Right ventricle myocardium superior (tissue), 1 donor: ENCODE measurements at regions of chr10 and their contacts with region 1.

Region 1: DNA sequence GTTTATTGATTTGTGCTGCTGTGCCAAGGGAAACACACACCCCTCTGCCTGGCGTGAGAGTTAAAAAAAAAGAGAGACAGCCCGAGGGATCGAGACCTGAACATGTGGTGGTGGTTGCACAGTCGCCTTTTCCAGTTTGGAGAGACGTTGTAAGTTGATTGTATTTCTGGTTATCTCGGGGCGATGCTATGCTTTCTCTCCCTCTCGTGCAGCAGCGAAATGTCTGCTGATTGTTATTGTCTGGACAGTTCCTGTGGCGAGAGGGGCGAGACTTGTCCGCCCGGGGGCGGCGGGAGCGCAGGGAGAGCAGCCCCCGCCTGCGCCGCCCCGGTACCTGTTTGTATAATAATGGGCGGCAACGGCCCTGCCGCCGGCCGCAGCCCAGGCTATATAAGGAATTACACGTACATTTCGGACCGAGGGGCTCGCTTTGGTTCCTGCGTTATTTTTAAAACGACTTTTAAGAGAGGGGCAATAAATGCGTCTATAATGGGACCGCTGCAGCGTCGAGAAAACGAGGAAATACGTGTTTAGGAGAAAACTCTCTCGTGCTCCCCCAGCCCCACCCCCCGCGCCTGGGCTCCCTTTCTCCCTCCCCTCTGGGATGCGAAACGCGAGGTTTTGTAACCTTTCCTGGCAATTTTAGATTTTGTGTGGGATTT is 1.7 kb downstream of the ZEB1 start:
- DNase-seq: peak; percentile 62
- ATAC-seq: peak; percentile 37

Region 2: DNA sequence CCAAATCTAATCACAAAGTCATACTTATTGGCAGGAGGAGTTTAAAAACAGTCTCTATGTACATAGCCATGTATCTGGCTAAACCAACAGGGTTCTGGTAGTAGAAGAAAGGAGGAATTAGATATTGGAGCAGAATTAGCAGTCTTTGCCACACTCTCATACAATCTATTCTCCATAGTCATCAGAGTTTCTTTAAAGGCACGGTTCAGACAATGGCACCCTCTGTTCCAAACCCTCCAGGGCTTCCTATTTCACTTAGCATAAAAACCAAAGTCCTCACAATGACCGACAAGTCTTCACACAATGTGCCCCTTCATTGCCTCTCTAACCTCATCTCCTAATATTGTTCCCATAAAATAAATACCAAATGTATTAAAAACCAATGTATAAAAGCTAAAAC is 301.7 kb before region 1 on chr10:
- intact Hi-C with region 1: no loop called
- DNase-seq: no peak
- ATAC-seq: peak; percentile 8

Region 3: GRCh38 chr10:31031558-31032257 is 289.0 kb before region 1 on chr10 and contains the start of gene ZNF438:
- intact Hi-C with region 1: loop called (anchors 5 kb)
- DNase-seq: peak; percentile 98
- ATAC-seq: peak; percentile 98
- total RNA-seq, gene ZNF438: 13.0 TPM

Region 4: GRCh38 chr10:31136930-31137885 is 183.5 kb before region 1 on chr10:
- intact Hi-C with region 1: no loop called
- DNase-seq: no peak
- ATAC-seq: no peak

Region 5: GRCh38 chr10:31490858-31491504 is 170.3 kb after region 1 on chr10:
- intact Hi-C with region 1: loop called (anchors 10 kb)
- DNase-seq: no peak
- ATAC-seq: peak; percentile 39